SK-N-SH (cell line): ENCODE measurements at regions of chr17 and their contacts with region 1.

Region 1: DNA sequence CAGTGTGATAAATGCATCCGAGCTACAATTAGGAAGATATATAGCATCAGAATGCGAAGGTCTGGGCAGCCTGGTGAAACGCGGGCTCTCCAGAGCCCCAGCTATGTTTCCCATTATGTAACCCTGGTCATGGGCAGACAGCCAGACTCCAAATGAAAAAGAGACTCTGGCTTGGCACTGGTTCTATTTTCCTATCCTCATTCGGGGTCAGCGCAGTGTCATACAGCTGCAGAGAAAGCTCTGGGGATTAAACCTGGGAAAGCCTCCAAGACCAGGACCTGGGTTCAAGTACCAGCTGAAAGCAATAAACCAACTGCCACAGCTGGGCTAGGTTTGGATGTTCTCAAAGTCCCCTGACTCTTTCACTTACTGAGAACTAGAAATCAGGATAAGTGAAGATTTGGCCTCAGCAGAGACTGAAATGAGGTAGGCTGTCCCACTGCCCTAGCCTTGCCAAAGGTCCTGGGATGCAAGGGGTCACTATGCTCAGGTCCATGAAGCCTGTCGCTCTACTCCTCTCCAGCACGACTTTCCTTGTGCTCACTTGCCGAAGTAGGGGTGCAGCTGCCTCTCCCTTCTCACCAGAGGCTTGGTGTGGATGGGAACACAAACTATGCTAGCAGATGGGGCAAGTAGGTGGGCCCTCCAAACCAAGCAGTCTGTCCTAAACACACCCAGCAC is 123.8 kb downstream of the SMG6 start:
- DNase-seq: peak; percentile 81
- H3K4me3 ChIP-seq: no peak overlapping the region
- H3K27ac ChIP-seq: peak overlapping the region; percentile 85 to 92
- H3K4me1 ChIP-seq: peaks cover 64 to 73% of the 10 kb centered on the region in 2 experiments
- H3K27me3 ChIP-seq: no peaks in the 10 kb centered on the region
- CTCF ChIP-seq: no peak
- EP300 ChIP-seq: peak; percentile 91 to 93
- RAD21 ChIP-seq: peak; percentile 45

Region 2: DNA sequence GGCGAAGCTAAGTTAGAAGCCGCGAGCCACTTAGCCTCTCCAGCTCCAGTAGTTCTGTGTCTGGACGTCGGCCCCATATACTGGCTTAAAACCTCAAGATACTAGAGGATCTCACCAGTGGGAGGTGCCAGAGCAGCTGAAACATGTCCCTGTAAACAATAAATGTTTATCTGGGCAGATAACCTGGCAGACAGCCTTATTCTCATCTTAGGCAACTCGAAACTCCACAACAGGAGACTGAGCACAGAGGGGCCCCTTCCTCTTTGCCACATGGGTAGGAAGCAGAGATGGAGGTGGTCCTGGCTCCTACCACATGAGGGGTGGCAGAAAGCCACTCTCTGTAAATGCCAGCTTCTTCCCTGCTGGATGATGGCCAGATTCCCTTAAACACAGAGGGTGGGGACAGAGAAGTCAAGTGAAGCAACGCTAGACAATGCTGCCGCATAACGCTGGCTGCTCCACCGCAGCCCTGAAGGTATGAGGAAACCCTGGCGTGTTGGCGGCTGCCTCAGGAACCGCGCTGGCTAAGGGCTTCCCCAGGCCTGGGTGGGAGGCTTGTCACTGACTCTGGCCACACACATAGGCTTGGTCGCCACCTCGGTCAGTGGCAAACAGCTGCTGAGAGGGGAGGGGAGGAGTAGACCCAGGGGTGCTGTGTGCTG is 57.0 kb before region 1 on chr17:
- CTCF ChIA-PET with region 1: interaction called, 13 read pairs
- POLR2A ChIA-PET with region 1: interaction called, 4 read pairs
- DNase-seq: peak; percentile 56
- H3K4me3 ChIP-seq: no peak overlapping the region
- H3K27ac ChIP-seq: peak overlapping the region in 1 of 2 experiments; percentile 14; a peak in 1 of 4 replicates
- H3K4me1 ChIP-seq: peaks cover 13 to 18% of the 10 kb centered on the region in 2 experiments; a peak in 2 of 4 replicates
- H3K27me3 ChIP-seq: no peaks in the 10 kb centered on the region
- CTCF ChIP-seq: no peak
- EP300 ChIP-seq: no peak
- RAD21 ChIP-seq: peak; percentile 43